Heart right ventricle (tissue), 16 donors: ENCODE measurements at regions of chr2 and their contacts with region 1.

Region 1: GRCh38 chr2:241508240-241509154 is at the start of gene STK25:
- DNase-seq: peak; percentile 97 to 99
- ATAC-seq: peak; percentile 97 to 99 (median 98)
- H3K4me3 ChIP-seq: peak within 1 kb of the TSS; percentile 75 to 98 (median 90)
- H3K27ac ChIP-seq: peak within 1 kb of the TSS; percentile 75 to 94 (median 88)
- H3K4me1 ChIP-seq: peaks cover 23 to 44% (median 35%) of the 10 kb centered on the region in 9 donors
- H3K27me3 ChIP-seq: no peaks in the 10 kb centered on the region
- CTCF ChIP-seq: peak in 1 of 9 donors; percentile 0
- total RNA-seq, gene STK25: 66.1 to 104 (median 81.9) TPM

Region 2: DNA sequence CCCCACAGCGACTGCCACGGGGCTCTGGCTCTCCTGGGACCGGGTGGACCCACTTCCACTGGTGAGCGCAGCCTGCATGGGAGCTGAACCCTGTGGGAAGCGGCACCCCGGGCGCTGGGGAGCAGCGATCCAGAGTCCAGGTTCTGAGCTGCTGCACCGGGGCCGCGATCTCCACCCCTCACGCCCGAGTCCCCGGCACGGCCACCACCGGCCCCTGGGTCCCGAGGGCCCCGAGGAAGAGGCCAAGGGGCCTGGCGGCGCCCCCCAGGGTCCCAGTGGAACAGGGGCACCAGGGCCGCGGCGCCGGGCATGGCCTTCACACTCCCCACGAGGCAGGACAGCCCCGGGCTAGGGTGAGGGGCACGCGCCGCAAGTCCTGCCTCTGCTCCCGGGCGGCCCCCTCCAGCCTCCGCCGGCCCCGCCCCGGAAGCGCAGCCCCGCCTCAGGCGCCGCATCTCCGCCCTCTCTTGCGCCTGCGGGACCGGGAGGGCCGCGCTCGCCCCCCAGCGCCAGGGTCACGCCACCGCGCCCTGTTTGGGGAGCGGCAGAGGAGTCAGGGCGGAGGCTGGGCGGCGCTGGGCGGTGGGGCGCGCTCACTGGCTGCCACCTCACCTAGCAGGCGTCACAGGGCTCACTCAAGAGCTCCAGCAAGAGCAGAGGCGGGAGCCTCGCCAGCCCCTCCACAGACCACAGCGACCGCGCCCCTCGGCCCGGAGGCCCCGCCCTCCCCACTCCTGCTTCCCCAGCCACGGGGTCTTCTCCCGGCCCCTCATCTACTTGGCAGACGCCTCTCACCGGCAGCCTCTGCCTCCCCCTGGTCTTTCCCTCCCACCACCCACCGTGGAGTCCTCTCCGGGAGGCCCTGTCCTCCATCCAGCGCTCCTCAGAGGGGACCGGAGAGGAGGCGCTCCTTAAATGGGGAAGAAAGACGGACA is 101.6 kb after region 1 on chr2:
- intact Hi-C with region 1: loop called in 6 of 10 experiments (anchors 2 to 10 kb)
- DNase-seq: peak; percentile 77 to 87
- ATAC-seq: peak; percentile 90 to 96 (median 94)
- H3K4me3 ChIP-seq: peak overlapping the region; percentile 46 to 76 (median 64)
- H3K27ac ChIP-seq: peak overlapping the region; percentile 5 to 82 (median 75)
- H3K4me1 ChIP-seq: peaks cover 3 to 33% (median 20%) of the 10 kb centered on the region in 9 donors
- H3K27me3 ChIP-seq: no peaks in the 10 kb centered on the region
- CTCF ChIP-seq: peak; percentile 59 to 83 (median 76)

Region 3: DNA sequence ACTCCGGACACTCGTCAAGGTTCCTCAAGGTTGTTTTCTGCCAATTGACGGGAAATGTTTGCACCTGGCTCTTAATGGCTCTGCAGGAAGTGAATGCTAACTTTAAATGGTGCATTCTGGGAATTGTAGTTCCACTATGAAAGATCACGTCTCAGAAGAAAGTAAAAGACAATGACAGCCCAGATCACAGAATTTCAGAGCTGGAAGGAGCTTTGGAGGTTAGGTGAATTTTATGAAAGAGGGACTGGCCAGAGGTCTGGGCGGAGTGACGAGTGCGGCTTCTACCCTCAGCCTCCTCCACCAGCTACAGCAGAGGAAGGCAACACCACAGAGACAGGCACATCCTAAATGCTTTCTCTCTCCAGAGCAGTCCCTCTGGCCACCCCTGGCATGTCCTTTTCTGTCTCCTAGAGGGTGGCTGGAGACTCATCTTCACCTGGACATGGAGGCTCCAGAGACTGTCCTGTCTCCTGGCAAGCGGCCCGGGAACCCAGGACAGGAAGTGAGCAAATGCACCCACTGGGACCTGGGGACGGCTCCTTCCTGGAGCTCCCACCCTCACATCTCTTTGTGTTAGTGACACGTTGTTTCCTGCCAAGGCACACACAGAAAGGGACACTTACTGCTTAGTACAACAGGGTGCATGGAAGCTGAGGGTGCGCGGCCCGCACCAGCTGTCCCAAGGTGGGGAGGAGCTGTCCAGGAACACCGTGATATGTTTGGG is 109.1 kb after region 1 on chr2:
- intact Hi-C with region 1: loop called in 6 of 10 experiments (anchors 2 to 10 kb)
- DNase-seq: peak; percentile 68 to 76
- ATAC-seq: peak; percentile 48 to 83 (median 70)
- H3K4me3 ChIP-seq: peak overlapping the region in 9 of 10 donors; percentile 19 to 52 (median 43)
- H3K27ac ChIP-seq: peak overlapping the region; percentile 47 to 89 (median 77)
- H3K4me1 ChIP-seq: peaks cover 4 to 53% (median 33%) of the 10 kb centered on the region in 9 donors
- H3K27me3 ChIP-seq: no peaks in the 10 kb centered on the region
- CTCF ChIP-seq: no peak

Region 4: GRCh38 chr2:241637000-241637791 is 128.7 kb after region 1 on chr2 and contains the starts of genes ATG4B and THAP4:
- intact Hi-C with region 1: loop called in 1 of 10 experiments (anchors 5 kb)
- DNase-seq: peak; percentile 85 to 88
- ATAC-seq: peak; percentile 89 to 95 (median 90)
- H3K4me3 ChIP-seq: peak within 1 kb of the TSS; percentile 34 to 97 (median 86)
- H3K27ac ChIP-seq: peak within 1 kb of the TSS; percentile 91 to 100 (median 99)
- H3K4me1 ChIP-seq: peaks cover 17 to 66% (median 48%) of the 10 kb centered on the region in 9 donors
- H3K27me3 ChIP-seq: no peaks in the 10 kb centered on the region
- CTCF ChIP-seq: no peak
- total RNA-seq, gene ATG4B: 34.7 to 52.1 (median 41.2) TPM
- total RNA-seq, gene THAP4: 68.7 to 101 (median 75.4) TPM